Dorsolateral prefrontal cortex (tissue), 120 donors: ENCODE measurements at regions of chr15 and their contacts with region 1.

Region 1: DNA sequence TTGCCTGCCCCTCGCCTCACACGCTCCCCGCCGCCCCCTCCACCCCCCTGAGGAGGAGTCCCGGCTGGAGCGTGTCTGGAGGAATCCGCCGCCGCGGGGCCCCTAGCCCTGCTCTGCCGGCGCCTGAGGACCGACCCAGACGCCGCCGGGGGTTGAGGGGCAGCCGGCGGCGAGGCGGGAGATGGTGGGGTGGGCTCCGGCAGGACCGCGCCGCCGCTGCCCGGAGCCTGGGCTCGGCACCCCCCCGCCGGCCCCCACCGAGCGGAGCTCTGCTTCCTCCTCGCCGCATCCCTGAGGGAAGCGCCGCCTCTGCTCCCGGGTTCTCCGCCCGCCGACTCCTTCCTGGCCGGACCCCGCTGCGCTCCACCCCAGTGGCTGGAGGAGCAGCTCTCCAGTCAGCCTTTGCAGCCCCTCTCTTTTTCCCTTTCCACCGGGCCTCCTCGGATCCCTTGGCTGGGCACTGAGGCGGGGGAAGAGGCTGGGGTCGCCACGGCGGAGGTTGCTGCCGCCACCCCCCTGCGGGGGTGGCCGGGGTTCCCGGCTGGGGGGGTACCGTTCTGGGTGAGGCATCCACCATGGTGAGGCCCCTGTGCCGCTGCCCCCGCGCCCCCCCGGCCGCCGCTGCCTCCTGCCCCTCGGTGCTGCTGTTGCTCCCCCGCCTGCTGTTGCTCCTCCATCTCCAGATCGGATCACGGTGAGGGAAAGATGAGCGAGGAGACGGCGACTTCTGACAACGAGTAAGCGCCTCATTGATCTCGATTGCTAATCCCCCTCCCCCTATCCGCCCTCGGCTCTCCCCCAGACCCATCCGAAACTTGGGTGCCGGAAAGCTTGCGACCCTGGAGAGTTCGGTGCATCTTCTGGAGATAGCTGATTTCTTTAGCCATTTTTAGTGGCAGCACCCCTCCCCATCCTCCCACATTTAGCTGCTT is at the start of gene SPRED1:
- DNase-seq: peak; percentile 39 to 81 (median 60)
- H3K4me3 ChIP-seq: peak within 1 kb of the TSS; percentile 62 to 97 (median 88)
- H3K27ac ChIP-seq: peak within 1 kb of the TSS; percentile 87 to 100 (median 98)
- H3K27me3 ChIP-seq: no peaks in the 10 kb centered on the region
- CTCF ChIP-seq: no peak
- total RNA-seq, gene SPRED1: 32.0 to 67.9 (median 45.7) TPM

Region 2: GRCh38 chr15:38072348-38073177 is 180.2 kb before region 1 on chr15:
- intact Hi-C with region 1: loop called (anchors 1 kb)
- DNase-seq: peak; percentile 52 to 94 (median 92)
- H3K4me3 ChIP-seq: peak overlapping the region; percentile 34 to 80 (median 64)
- H3K27ac ChIP-seq: peak overlapping the region; percentile 74 to 98 (median 95)
- H3K27me3 ChIP-seq: no peaks in the 10 kb centered on the region
- CTCF ChIP-seq: peak in 38 of 56 donors; percentile 4 to 49 (median 24)

Region 3: GRCh38 chr15:38148471-38148870 is 104.3 kb before region 1 on chr15:
- intact Hi-C with region 1: no loop called
- DNase-seq: no peak
- H3K4me3 ChIP-seq: no peak overlapping the region
- H3K27ac ChIP-seq: no peak overlapping the region
- H3K27me3 ChIP-seq: no peaks in the 10 kb centered on the region
- CTCF ChIP-seq: no peak

Region 4: DNA sequence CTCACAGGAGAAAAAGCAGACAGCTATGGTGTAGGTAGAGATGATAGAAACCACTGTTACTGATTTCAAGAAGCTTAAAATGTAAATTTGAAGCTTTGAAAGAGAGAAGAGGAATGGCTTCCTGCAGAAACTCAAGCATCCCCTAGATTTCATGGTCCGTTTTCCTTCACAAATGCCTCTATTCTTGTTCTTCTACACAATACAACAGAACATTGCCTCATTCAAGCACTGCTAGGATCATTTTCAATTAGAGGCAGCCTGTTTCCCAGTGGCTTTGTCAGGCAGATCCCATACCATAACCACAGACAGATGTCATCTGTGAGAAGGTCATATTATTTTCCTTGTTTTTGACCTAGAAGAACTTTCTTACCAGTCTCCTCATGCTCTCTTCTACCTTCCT is 78.1 kb before region 1 on chr15:
- intact Hi-C with region 1: loop called in 1 of 2 experiments (anchors 2 kb)
- DNase-seq: no peak
- H3K4me3 ChIP-seq: no peak overlapping the region
- H3K27ac ChIP-seq: peak overlapping the region in 41 of 59 donors; percentile 3 to 75 (median 46)
- H3K27me3 ChIP-seq: no peaks in the 10 kb centered on the region
- CTCF ChIP-seq: no peak

Region 5: DNA sequence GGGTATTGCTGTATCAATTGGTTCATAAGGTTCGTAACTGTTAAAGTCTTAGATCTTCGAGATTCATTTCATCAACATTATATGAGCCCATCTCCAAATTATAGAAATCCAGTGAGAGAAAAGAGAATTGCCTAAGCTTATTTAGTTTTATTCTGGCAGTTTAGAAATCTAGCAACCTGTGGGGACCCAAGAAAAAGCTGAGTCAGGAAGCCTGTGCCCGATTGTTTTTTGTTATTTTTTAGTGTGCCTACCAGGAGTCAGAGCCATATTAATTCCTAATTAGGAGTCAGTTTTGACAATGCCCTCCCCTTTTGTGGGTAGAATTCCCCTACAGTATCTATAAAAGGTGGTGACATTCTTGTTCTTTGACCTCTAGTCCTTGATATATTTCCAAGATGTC is 59.4 kb after region 1 on chr15:
- intact Hi-C with region 1: loop called in 1 of 2 experiments (anchors 5 kb)
- DNase-seq: no peak
- H3K4me3 ChIP-seq: no peak overlapping the region
- H3K27ac ChIP-seq: peak overlapping the region in 1 of 59 donors; percentile 4
- H3K27me3 ChIP-seq: no peaks in the 10 kb centered on the region
- CTCF ChIP-seq: no peak

Region 6: DNA sequence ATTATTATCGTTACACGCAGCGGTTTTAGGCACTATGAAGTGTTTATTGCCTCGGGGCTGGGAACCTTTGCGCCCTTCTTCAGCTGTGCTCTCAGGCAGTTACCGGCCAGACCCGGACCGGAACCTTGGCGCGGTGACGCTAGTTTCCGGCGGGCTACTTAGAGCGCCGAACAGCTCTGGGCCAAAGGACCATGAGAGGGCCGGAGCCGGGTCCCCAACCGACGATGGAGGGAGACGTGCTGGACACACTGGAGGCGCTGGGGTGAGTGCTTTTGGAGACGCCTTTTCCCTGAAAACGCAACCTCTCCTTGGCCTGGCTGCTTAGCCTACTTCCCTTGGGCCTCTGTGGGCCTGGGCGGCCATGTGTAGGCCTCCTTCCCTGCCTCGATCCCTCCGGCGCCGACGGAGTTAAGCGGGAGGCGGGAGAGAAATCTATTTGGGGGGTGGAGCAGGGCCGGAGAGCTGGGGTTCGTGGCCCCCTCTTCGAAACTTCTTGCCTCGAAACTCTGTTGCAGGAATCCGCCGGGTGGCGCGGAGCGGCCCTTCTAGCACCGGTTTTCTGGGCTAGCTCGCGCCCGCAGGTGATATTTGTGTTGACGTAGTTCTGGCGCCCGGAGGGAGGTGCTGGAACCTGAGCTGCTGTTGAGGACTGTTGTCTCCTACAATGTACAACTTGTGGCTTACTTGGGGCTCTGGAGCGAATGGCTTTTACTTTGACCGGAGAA is 201.4 kb after region 1 on chr15 and contains the start of gene FAM98B:
- intact Hi-C with region 1: loop called (anchors 5 kb)
- DNase-seq: peak; percentile 84 to 93 (median 90)
- H3K4me3 ChIP-seq: peak within 1 kb of the TSS; percentile 53 to 99 (median 88)
- H3K27ac ChIP-seq: peak within 1 kb of the TSS; percentile 71 to 98 (median 90)
- H3K27me3 ChIP-seq: no peaks in the 10 kb centered on the region
- CTCF ChIP-seq: peak in 47 of 56 donors; percentile 4 to 68 (median 36)
- total RNA-seq, gene FAM98B: 17.3 to 53.0 (median 30.8) TPM